H1 (cell line): ENCODE measurements at regions of chr7 and their contacts with region 1.

Region 1: DNA sequence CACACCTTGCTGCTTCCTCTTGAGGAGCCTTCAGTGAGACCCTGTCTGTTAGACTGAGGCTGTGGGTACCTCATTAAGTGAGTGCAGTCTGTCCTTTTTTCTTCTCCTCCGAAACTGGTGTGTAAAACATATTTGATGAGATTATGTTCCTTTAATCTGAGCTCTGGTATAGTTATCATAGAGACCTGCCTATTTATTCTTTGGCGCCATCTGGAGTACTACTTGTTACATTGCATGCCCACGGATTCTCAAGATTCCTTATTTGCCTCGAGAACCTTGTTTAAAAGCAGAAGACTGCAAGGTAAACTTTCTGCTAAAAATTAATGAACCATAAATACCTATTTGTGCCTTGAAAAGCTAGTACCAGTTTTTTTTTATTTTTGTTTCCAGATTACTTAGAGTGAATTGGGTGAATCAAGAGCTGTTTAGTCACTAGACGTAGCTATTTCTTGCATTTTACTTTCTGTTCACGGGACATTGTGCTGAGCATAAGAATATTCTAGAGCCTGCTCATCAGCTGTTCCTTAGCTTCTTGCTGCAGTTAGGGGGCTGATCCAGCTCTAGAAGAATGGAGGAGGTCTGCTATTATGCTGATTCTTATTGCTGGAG is 16.9 kb upstream of the STMP1 start:
- DNase-seq: no peak
- H3K4me3 ChIP-seq: no peak overlapping the region
- H3K27ac ChIP-seq: no peak overlapping the region
- H3K4me1 ChIP-seq: no peaks in the 10 kb centered on the region
- H3K27me3 ChIP-seq: no peaks in the 10 kb centered on the region
- CTCF ChIP-seq: peak in 2 of 3 experiments; percentile 32 to 58; a peak in 2 of 4 replicates
- EP300 ChIP-seq: no peak
- POLR2A ChIP-seq: no peak
- RAD21 ChIP-seq: peak; percentile 26 to 32; a peak in 2 of 4 replicates

Region 2: DNA sequence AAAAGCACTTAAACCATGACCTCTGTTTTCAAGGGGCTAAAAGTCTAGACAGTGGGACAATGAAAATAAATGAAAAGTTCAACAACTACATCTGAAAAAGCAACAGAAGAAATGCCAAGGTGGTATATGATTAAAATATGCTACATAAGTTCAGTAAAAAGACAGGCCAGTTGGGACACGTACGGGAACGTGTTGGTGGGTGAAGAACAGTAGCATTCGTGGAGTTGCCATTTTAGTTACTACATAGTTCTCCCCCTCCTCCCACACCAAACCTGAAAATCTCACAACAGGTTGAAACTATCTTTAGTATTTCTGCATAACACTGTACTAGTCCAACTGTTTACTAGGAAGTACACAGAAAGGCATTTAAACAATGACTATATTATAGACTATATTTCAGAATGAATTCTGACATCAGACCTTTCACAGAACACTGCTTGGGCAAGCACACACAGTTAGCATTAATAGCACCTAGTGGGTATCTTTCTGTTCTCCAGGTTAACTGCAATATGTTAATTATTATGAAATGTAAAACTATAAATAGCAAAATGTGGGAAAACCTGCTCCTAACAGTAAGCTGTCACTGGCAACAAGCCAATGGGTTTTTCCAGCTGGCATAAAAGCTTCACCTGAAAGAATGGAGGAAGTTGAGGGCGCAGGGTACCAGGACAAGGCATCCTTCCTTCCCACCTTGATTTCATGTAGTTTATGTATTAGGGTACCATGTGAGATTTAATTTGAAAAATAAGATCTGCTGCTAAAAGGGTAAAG is 276.8 kb before region 1 on chr7:
- CTCF ChIA-PET with region 1: no interaction called
- POLR2A ChIA-PET with region 1: no interaction called
- DNase-seq: no peak
- H3K4me3 ChIP-seq: no peak overlapping the region
- H3K27ac ChIP-seq: no peak overlapping the region
- H3K4me1 ChIP-seq: no peaks in the 10 kb centered on the region
- H3K27me3 ChIP-seq: no peaks in the 10 kb centered on the region
- CTCF ChIP-seq: no peak
- EP300 ChIP-seq: no peak
- POLR2A ChIP-seq: no peak
- RAD21 ChIP-seq: no peak

Region 3: GRCh38 chr7:135578569-135578968 is 66.8 kb before region 1 on chr7:
- CTCF ChIA-PET with region 1: interaction called, 17 read pairs
- POLR2A ChIA-PET with region 1: interaction called, 3 read pairs
- DNase-seq: no peak
- H3K4me3 ChIP-seq: no peak overlapping the region
- H3K27ac ChIP-seq: no peak overlapping the region
- H3K4me1 ChIP-seq: no peaks in the 10 kb centered on the region
- H3K27me3 ChIP-seq: no peaks in the 10 kb centered on the region
- CTCF ChIP-seq: no peak
- EP300 ChIP-seq: no peak
- POLR2A ChIP-seq: no peak
- RAD21 ChIP-seq: no peak

Region 4: GRCh38 chr7:135616136-135616535 is 29.3 kb before region 1 on chr7:
- CTCF ChIA-PET with region 1: interaction called, 56 read pairs
- POLR2A ChIA-PET with region 1: no interaction called
- DNase-seq: no peak
- H3K4me3 ChIP-seq: no peak overlapping the region
- H3K27ac ChIP-seq: no peak overlapping the region
- H3K4me1 ChIP-seq: no peaks in the 10 kb centered on the region
- H3K27me3 ChIP-seq: no peaks in the 10 kb centered on the region
- CTCF ChIP-seq: no peak
- EP300 ChIP-seq: no peak
- POLR2A ChIP-seq: no peak
- RAD21 ChIP-seq: no peak

Region 5: DNA sequence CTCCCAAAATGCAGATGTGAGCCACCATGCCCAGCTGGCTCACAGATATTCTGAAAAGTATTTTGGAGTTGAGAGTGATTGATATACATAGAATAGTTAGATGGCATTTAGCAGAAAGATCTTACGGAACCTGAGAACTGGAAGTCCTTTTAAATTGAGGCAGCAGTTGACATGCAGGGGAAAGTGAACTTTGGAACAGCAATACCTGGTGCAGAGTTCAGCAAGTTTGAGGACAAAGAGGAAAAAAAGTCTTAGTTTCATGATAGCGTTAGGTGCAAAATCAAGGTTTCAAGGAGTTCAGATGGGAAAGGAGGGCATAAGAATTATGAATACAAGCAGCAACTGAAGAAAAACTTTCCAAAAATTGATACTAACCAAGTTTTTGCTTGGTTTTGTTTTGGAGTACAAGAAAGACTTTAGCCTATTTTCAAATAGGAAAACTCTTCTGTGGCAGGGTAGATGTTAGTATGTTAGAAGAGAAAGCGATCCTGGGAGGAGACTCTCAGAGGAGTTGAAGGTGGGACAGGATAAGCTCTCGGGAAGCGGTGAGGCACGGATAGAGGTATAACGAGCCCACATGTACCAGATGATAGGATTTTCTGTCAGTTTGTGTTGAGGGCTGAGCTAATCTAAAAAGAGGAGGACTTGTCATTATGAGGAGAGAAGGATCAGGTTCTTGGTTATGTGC is 11.1 kb before region 1 on chr7:
- CTCF ChIA-PET with region 1: interaction called, 114 read pairs
- POLR2A ChIA-PET with region 1: interaction called, 6 read pairs
- DNase-seq: no peak
- H3K4me3 ChIP-seq: no peak overlapping the region
- H3K27ac ChIP-seq: no peak overlapping the region
- H3K4me1 ChIP-seq: no peaks in the 10 kb centered on the region
- H3K27me3 ChIP-seq: no peaks in the 10 kb centered on the region
- CTCF ChIP-seq: no peak
- EP300 ChIP-seq: no peak
- POLR2A ChIP-seq: no peak
- RAD21 ChIP-seq: no peak

Region 6: DNA sequence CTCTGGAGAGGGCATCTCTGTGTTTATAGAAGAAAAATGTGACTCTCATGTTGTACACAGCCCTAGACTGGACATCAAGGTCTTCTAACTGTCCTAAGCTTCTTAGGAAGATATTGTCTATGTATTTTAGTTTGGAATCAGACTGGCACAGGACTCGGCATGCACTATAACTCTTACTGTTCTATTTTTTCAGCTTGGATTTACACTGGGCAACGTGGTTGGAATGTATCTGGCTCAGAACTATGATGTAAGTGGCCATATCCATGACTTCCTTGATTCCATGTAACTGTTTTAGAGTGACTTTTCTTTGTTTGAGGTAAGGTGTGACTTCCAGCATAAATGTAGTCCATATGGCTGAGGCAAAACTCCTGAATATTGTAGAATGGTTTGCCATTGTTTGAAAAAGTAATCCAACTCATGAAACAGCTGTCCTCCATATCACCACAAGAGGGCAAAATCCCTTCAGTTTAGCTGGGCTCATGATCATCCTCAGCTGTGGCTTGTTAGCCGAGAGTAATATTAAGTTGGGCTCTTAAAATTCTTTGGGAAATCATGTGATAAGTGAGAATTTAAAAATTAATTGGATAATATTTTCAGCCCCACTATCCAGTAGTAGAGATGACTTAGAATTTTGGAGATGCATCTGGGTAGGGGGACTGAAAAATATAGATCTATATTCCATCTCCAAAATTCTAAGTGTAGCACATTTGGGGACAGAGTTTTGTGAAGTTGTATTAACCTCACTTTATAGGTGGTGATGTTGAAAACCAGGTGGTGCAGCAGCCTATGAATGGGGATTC is 27.4 kb after region 1 on chr7:
- CTCF ChIA-PET with region 1: interaction called, 20 read pairs
- POLR2A ChIA-PET with region 1: interaction called, 3 read pairs
- DNase-seq: no peak
- H3K4me3 ChIP-seq: no peak overlapping the region
- H3K27ac ChIP-seq: no peak overlapping the region
- H3K4me1 ChIP-seq: no peaks in the 10 kb centered on the region
- H3K27me3 ChIP-seq: no peaks in the 10 kb centered on the region
- CTCF ChIP-seq: peak in 2 of 3 experiments; percentile 67 to 82; a peak in 3 of 4 replicates
- EP300 ChIP-seq: no peak
- POLR2A ChIP-seq: no peak
- RAD21 ChIP-seq: peak; percentile 71 to 75

Region 7: DNA sequence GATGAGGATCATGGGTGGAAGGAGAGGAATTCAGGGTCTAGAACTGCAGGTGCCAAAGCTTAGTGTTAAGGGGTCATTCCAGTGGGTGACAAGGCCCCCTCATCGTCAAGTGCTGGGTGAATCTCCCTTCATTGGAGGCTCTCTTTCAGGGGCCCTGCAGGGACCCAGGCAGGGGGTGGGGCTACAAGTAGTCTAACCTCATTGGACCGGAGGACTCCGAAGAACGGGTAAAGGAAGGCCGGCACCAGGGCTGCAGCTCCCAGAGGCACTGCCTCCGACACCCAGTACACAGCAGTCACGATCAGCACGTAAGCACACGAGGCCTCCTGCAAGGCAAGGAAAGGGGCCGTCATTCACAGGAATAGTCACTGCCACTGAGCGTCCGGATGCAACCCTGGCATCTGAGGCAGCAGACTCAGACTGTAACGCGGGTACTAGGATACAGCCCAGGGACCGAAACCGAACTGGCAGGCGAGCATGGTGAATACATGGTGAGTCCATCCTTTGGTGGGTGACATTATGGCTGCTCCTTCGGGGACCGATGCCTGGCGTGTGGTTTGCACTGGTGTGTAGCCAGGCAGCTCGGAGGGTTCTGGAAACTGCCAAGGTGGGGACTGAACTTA is 75.9 kb after region 1 on chr7:
- CTCF ChIA-PET with region 1: no interaction called
- POLR2A ChIA-PET with region 1: no interaction called
- DNase-seq: no peak
- H3K4me3 ChIP-seq: no peak overlapping the region
- H3K27ac ChIP-seq: no peak overlapping the region
- H3K4me1 ChIP-seq: peaks cover 0 to 3% (median 1%) of the 10 kb centered on the region in 4 experiments; a peak in 2 of 7 replicates
- H3K27me3 ChIP-seq: no peaks in the 10 kb centered on the region
- CTCF ChIP-seq: no peak
- EP300 ChIP-seq: no peak
- POLR2A ChIP-seq: no peak
- RAD21 ChIP-seq: no peak

Region 8: GRCh38 chr7:135736586-135737305 is 91.3 kb after region 1 on chr7:
- CTCF ChIA-PET with region 1: no interaction called
- POLR2A ChIA-PET with region 1: no interaction called
- DNase-seq: no peak
- H3K4me3 ChIP-seq: no peak overlapping the region
- H3K27ac ChIP-seq: no peak overlapping the region; the same call in 1 of the 2 replicates
- H3K4me1 ChIP-seq: no peaks in the 10 kb centered on the region
- H3K27me3 ChIP-seq: no peaks in the 10 kb centered on the region
- CTCF ChIP-seq: no peak
- EP300 ChIP-seq: no peak
- POLR2A ChIP-seq: no peak
- RAD21 ChIP-seq: no peak